ENCODE measurements at regions of chr3 and their contacts with region 1.

Region 1: DNA sequence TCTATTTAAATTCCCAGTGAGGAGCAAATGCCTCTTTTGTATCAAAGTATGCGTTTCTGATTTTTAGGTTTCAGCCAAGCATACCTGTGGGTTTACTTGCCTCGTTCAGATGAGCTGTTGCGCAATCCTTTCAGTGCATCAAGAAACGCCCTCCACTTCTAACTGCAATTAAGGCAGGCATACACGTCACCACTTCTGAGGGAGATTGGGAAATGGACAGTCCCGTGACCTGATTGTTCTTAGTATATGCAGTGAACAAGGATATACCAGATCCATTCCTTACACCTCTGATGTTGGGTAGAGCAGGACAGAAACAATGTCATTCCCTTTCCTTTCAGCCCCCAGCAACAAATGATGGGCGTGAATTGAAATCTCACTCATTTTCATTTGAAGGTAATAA is 219.0 kb downstream of the ITPR1 start:
- DNase-seq: no peak
- H3K4me3 ChIP-seq: no peak overlapping the region
- H3K4me3 Mint-ChIP-seq: no peak overlapping the region
- H3K27ac ChIP-seq: no peak overlapping the region
- H3K27ac Mint-ChIP-seq: no peak overlapping the region
- H3K4me1 ChIP-seq: no peaks in the 10 kb centered on the region
- H3K4me1 Mint-ChIP-seq: no peaks in the 10 kb centered on the region
- H3K27me3 ChIP-seq: no peaks in the 10 kb centered on the region
- H3K27me3 Mint-ChIP-seq: no peaks in the 10 kb centered on the region

Region 2: GRCh38 chr3:4551794-4552442 is 160.2 kb before region 1 on chr3:
- CTCF ChIA-PET with region 1: no interaction called
- POLR2A ChIA-PET with region 1: no interaction called
- DNase-seq: no peak
- H3K4me3 ChIP-seq: no peak overlapping the region
- H3K4me3 Mint-ChIP-seq: no peak overlapping the region
- H3K27ac ChIP-seq: no peak overlapping the region
- H3K27ac Mint-ChIP-seq: no peak overlapping the region
- H3K4me1 ChIP-seq: no peaks in the 10 kb centered on the region
- H3K4me1 Mint-ChIP-seq: peaks cover 14 to 26% (median 17%) of the 10 kb centered on the region in 3 donors
- H3K27me3 ChIP-seq: no peaks in the 10 kb centered on the region
- H3K27me3 Mint-ChIP-seq: no peaks in the 10 kb centered on the region

Region 3: GRCh38 chr3:4647411-4647810 is 64.7 kb before region 1 on chr3:
- CTCF ChIA-PET with region 1: no interaction called
- POLR2A ChIA-PET with region 1: no interaction called
- DNase-seq: no peak
- H3K4me3 ChIP-seq: no peak overlapping the region
- H3K4me3 Mint-ChIP-seq: no peak overlapping the region
- H3K27ac ChIP-seq: no peak overlapping the region
- H3K27ac Mint-ChIP-seq: no peak overlapping the region
- H3K4me1 ChIP-seq: peaks cover 8% of the 10 kb centered on the region
- H3K4me1 Mint-ChIP-seq: peaks cover 7 to 12% (median 7%) of the 10 kb centered on the region in 3 donors
- H3K27me3 ChIP-seq: no peaks in the 10 kb centered on the region
- H3K27me3 Mint-ChIP-seq: no peaks in the 10 kb centered on the region

Region 4: DNA sequence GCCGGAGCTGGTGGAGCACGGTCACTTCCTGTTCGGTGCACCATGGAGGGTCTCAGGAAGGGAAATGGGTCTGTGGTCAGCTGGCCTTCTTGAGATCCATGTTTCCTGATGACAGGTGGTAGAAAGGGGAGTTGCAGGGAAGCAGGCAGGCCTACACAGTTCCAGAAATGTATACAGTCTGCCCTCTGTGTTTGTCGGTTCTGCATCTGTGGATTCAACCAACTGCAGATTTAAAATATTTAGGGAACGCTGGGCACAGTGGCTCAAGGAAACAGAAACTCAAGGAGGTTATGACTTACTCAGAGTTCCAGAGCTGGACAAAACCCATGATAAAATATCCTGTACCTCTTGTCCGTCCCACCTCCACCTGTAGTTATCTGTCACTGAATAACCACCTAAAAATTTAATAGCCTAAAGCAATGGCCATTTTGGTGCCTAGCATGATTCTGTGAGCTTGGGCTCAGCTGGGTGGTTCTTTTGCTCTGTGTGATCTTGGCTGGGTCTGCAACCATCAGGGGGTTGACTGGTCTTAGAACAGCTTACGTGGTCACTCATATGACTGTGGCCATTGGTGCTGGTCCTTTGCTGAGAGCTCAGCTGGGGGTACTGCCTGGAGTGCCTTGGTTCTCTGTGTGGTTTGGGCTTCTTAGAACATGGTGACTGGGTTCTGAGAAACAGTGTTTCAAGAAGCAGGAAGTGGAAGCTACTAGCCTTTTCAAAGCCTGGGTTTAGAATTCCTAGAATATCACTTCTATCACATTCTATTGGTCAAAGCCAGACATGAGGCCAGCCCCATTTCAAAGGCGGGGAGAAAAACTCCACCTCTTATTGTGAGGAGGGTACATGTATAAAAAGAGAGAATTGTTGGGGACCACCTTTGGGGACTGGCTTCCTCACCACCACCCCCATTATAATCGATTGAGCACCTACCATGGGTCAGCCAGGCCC is 27.4 kb after region 1 on chr3:
- CTCF ChIA-PET with region 1: no interaction called
- POLR2A ChIA-PET with region 1: no interaction called
- DNase-seq: no peak
- H3K4me3 ChIP-seq: peak overlapping the region; percentile 18
- H3K4me3 Mint-ChIP-seq: peak overlapping the region in 6 of 7 donors; percentile 45 to 80 (median 55)
- H3K27ac ChIP-seq: peak overlapping the region; percentile 77
- H3K27ac Mint-ChIP-seq: peak overlapping the region in 7 of 8 donors; percentile 3 to 95 (median 85)
- H3K4me1 ChIP-seq: peaks cover 57% of the 10 kb centered on the region
- H3K4me1 Mint-ChIP-seq: peaks cover 58 to 66% (median 60%) of the 10 kb centered on the region in 3 donors
- H3K27me3 ChIP-seq: no peaks in the 10 kb centered on the region
- H3K27me3 Mint-ChIP-seq: no peaks in the 10 kb centered on the region

Region 5: GRCh38 chr3:4821975-4822374 is 109.8 kb after region 1 on chr3:
- CTCF ChIA-PET with region 1: interaction called, 22 read pairs
- POLR2A ChIA-PET with region 1: no interaction called
- DNase-seq: peak; percentile 79 to 93 (median 85)
- H3K4me3 ChIP-seq: no peak overlapping the region
- H3K4me3 Mint-ChIP-seq: peak overlapping the region; percentile 1 to 74 (median 63)
- H3K27ac ChIP-seq: peak overlapping the region; percentile 5
- H3K27ac Mint-ChIP-seq: peak overlapping the region; percentile 89 to 99 (median 99)
- H3K4me1 ChIP-seq: peaks cover 58% of the 10 kb centered on the region
- H3K4me1 Mint-ChIP-seq: peaks cover 53 to 71% (median 68%) of the 10 kb centered on the region in 3 donors
- H3K27me3 ChIP-seq: no peaks in the 10 kb centered on the region
- H3K27me3 Mint-ChIP-seq: no peaks in the 10 kb centered on the region

Region 6: GRCh38 chr3:4986782-4987537 is 274.8 kb after region 1 on chr3:
- CTCF ChIA-PET with region 1: interaction called, 24 read pairs
- POLR2A ChIA-PET with region 1: no interaction called
- DNase-seq: peak; percentile 49 to 78 (median 72)
- H3K4me3 ChIP-seq: peak overlapping the region; percentile 57
- H3K4me3 Mint-ChIP-seq: peak overlapping the region; percentile 84 to 92 (median 85)
- H3K27ac ChIP-seq: peak overlapping the region; percentile 81
- H3K27ac Mint-ChIP-seq: peak overlapping the region; percentile 84 to 99 (median 96)
- H3K4me1 ChIP-seq: peaks cover 46% of the 10 kb centered on the region
- H3K4me1 Mint-ChIP-seq: peaks cover 49 to 73% (median 65%) of the 10 kb centered on the region in 3 donors
- H3K27me3 ChIP-seq: no peaks in the 10 kb centered on the region
- H3K27me3 Mint-ChIP-seq: peaks cover 0 to 4% of the 10 kb centered on the region in 2 donors

Region 7: DNA sequence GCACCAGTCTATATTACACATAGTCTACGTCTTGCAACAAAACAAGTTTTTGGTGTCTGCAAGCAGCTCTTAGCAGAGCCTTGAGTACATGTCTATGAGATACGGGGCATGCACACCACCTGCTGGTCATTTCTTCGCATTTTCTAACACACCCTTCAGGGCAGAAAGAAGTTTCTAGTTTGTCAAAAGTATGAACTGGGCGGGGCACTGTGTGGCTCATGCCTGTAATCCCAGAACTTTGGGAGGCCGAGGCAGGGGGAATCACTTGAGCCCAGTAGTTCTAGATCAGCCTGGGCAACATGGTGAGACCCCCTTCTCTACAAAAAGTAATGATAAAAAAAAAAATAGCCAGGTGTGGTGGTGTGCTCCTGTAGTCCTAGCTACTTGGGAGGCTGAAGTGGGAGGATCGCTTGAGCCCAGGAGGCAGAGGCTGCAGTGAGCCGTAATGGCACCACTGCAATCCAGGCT is 345.7 kb after region 1 on chr3:
- CTCF ChIA-PET with region 1: interaction called, 95 read pairs
- POLR2A ChIA-PET with region 1: interaction called, 4 read pairs
- DNase-seq: peak; percentile 52 to 79 (median 61)
- H3K4me3 ChIP-seq: no peak overlapping the region
- H3K4me3 Mint-ChIP-seq: no peak overlapping the region
- H3K27ac ChIP-seq: no peak overlapping the region
- H3K27ac Mint-ChIP-seq: no peak overlapping the region
- H3K4me1 ChIP-seq: no peaks in the 10 kb centered on the region
- H3K4me1 Mint-ChIP-seq: no peaks in the 10 kb centered on the region
- H3K27me3 ChIP-seq: no peaks in the 10 kb centered on the region
- H3K27me3 Mint-ChIP-seq: peaks cover 7 to 10% of the 10 kb centered on the region in 2 donors